Activated CD8-positive, alpha-beta T cell treated with anti-CD3 and anti-CD28 coated beads, Interleukin-2, amount 10 ng/mL, durations not matched to agents 7 days and 5 days (primary cell): ENCODE measurements at regions of chrX and their contacts with region 1.

Region 1: GRCh38 chrX:134484039-134484438 is 24.1 kb downstream of the HPRT1 start:
- DNase-seq: no peak
- ATAC-seq: no peak
- H3K4me3 Mint-ChIP-seq: no peak overlapping the region
- H3K27ac Mint-ChIP-seq: no peak overlapping the region
- H3K4me1 Mint-ChIP-seq: peaks cover 3% of the 10 kb centered on the region
- H3K27me3 Mint-ChIP-seq: no peaks in the 10 kb centered on the region

Region 2: GRCh38 chrX:134782796-134783195 is 298.8 kb after region 1 on chrX:
- CTCF ChIA-PET with region 1: interaction called, 18 read pairs
- POLR2A ChIA-PET with region 1: no interaction called
- DNase-seq: no peak
- ATAC-seq: no peak
- H3K4me3 Mint-ChIP-seq: no peak overlapping the region
- H3K27ac Mint-ChIP-seq: no peak overlapping the region
- H3K4me1 Mint-ChIP-seq: no peaks in the 10 kb centered on the region
- H3K27me3 Mint-ChIP-seq: no peaks in the 10 kb centered on the region